ENCODE measurements at regions of chr2 and their contacts with region 1.

Region 1: DNA sequence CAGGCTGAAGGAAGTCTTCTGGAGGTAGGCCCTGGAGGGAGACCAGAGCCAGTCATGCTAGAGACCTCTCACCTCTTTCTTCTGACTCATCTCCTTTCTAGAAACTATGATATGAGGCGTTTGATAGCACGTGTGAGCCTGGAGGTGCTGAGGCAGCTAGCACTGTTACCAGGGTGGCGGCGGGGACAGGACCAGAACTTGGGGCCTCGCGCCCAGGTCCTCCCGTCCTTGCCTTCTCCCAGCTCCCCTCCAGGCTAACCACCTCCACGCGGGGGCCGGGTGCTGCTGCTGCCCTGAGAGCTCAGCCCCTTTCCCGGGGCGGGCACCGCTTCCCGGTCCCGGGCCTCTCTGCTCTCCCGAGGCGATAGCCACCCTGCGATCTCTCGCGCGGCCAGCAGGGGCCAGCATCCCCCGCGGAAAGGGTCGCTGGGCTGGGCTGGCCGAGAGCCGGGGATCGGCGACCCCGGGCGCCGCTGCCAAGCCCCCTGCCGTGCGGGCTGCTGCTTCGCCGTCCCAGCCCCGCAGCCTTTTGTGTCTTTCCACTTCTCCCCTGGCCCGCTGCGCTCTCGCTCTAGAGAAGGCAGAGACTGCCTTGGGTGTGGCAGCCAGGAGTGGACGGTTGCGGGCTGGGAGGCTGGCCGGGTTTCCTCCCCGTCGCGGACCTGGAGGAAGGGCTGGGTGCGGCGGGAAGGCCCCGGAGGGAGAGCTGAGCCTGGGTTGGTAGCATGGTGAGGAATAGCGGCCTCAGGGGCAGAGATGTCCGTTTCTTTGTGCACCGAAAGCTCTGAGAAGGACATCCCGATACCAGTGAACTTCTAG is 49.1 kb downstream of the TMEM17 start:
- DNase-seq: peak; percentile 84
- ATAC-seq: peak; percentile 82

Region 2: DNA sequence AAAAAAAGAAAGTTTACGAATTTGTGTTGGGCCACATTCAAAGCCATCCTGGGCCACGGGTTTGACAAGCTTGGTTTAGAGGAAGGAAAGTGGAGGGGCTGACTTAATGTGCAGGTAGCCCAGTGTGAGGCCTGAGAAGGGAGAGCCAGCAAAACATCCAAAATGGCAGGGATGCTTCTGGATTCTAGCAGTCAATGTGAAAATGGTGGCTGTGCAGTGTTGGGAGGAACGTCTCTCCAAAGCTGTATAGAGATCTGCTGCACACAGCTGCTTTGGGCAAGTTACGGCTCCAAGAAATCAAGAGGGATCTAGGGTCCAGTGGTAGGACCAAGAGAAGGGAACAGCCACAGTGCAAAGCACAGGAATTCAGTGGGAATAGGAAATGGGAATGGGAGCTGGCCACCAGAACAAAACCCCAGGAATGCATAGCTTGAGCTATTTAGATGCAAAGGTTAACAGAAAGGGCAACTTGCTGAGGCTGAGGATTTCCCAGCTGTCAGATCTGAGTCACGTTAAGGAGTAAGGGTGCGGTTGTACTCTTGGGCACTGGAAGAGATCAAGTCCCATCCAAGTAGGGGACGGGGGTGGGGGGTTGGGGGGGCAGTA is 190.4 kb before region 1 on chr2:
- intact Hi-C with region 1: no loop called
- DNase-seq: no peak
- ATAC-seq: no peak

Region 3: GRCh38 chr2:62505750-62506420 is 49.0 kb after region 1 on chr2 and contains the start of gene TMEM17:
- intact Hi-C with region 1: loop called (anchors 5 kb)
- DNase-seq: peak; percentile 92
- ATAC-seq: peak; percentile 97
- total RNA-seq, gene TMEM17: 1.3 TPM

Region 4: DNA sequence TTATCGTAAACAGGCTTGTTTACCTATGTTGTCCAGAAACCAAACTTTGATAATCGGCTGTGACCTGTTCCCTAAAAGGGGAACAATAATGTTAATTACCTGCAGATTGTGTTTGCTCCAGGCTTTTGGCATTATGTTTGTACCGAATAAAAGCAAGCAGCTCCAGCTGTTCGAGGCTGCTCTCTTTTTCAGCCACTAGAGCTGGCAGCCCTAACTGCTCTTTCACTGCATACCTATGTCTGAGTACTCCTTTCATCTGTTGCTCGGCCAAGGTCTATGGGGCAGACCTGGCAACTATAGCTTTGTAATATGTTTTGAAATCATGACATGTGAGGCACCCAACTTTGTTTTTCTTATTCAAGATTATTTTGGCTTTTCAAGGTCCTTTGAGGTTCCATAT is 170.7 kb after region 1 on chr2:
- intact Hi-C with region 1: no loop called
- DNase-seq: no peak
- ATAC-seq: no peak

Region 5: DNA sequence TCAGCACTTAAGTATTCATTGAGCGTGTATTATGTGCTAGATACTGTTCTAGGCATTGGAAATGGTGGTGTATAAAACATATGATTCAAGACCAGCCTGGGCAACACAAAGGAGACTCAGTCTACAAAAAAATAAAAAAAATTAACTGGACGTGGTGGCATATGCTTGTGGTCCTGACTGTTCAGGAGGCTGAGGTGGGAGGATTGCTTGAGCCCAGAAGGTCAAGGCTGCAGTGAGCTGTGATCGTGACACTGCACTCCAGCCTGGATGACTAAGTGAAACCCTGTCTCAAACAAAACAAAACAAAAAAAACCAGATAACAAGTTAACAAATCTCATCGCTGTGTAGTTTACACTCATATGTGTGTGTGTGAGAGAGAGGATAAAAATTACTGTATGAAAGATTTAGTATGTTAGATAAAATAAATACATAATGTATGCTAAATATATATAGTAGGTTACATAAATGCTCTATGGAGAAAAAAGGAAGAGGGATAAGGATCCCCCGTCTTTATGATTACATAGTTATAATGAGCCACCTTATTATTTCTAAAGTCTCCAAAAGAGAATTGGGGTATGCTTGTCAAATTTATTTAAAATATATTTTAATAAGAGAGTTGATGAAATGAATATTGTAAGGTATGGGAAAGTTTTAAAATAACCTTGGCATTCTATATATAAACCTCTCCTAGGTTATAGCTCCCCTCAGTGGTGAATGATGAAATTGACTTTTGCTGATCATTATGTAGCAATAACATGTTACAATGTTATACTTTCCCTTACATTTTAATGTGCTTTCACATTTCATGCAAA is 317.8 kb after region 1 on chr2:
- intact Hi-C with region 1: loop called (anchors 1 kb)
- DNase-seq: no peak
- ATAC-seq: no peak